ENCODE measurements at regions of chr2 and their contacts with region 1.

Region 1: DNA sequence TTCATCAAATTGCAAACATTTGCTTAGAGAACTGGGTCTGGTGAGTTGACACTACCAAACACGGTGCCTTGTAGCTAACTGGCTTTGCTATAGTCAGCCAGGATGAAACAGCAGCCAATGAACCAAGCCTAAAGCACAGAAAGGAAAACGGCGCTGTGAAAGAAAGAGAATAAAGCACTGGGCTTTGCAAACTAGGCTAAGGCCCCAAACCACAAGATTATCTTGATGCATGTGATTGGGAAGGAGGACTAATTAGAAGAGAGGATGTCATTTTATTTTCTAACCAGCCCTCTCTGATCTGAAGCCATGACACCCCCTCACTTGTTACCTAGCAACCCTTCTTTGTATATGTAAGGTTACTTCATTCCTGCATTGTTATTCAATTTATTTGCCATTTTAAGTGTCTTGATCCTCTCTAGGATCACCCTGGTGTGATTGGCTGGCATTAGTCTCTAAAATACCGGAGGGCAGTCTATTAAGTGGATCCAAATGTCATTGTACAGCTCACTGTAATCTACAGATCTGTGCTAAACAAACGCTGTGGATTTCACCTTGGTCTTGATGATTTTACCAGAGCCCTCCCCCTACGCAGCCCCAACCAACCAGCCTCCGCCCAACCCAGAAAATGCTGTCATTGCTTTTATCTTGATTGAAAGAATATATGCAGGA is 395.4 kb upstream of the ACVR2A start:
- DNase-seq: no peak
- H3K4me3 ChIP-seq: no peak overlapping the region
- H3K27ac ChIP-seq: no peak overlapping the region
- H3K4me1 ChIP-seq: no peaks in the 10 kb centered on the region
- H3K27me3 ChIP-seq: no peaks in the 10 kb centered on the region
- CTCF ChIP-seq: no peak
- EP300 ChIP-seq: no peak
- POLR2A ChIP-seq: no peak

Region 2: DNA sequence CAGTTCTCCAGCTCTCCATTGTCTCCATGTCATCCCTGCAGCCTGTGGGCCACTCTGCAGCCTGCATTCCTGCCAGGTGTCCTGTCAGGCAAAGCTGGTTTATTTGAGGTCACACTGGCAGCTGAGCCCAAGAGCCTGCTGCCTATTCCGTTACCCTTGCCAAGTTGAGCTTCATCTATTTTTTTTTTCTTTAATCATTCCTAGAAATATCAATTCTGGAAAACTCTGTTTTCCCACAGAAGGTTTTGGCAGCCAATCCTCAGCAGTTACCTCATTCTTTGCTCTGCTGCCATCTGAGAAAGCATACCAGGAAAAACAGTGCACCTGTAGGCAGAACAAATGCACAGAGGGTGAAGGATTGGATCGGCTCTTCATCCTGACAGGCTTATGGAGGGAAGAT is 15.6 kb before region 1 on chr2:
- intact Hi-C with region 1: loop called in 1 of 4 experiments (anchors 2 kb)
- DNase-seq: no peak
- H3K4me3 ChIP-seq: no peak overlapping the region
- H3K27ac ChIP-seq: no peak overlapping the region
- H3K4me1 ChIP-seq: no peaks in the 10 kb centered on the region
- H3K27me3 ChIP-seq: no peaks in the 10 kb centered on the region
- CTCF ChIP-seq: no peak
- EP300 ChIP-seq: no peak
- POLR2A ChIP-seq: no peak

Measured in ovary (tissue), 10 donors.